ENCODE measurements at regions of chr4 and their contacts with region 1.

Region 1: GRCh38 chr4:123248085-123248659 is 148.4 kb upstream of the SPRY1 start:
- DNase-seq: no peak
- ATAC-seq: peak in 1 of 2 donors; percentile 48
- H3K4me3 ChIP-seq: no peak overlapping the region
- H3K27ac ChIP-seq: peak overlapping the region in 1 of 4 donors; percentile 2
- H3K4me1 ChIP-seq: peaks cover 17 to 23% of the 10 kb centered on the region in 2 donors
- H3K27me3 ChIP-seq: no peaks in the 10 kb centered on the region
- CTCF ChIP-seq: no peak
- POLR2A ChIP-seq: no peak

Region 2: GRCh38 chr4:123304151-123304964 is 56.2 kb after region 1 on chr4:
- in situ Hi-C with region 1: no loop called
- intact Hi-C with region 1: loop called (anchors 5 kb)
- DNase-seq: no peak
- ATAC-seq: no peak
- H3K4me3 ChIP-seq: no peak overlapping the region
- H3K27ac ChIP-seq: no peak overlapping the region
- H3K4me1 ChIP-seq: no peaks in the 10 kb centered on the region
- H3K27me3 ChIP-seq: no peaks in the 10 kb centered on the region
- CTCF ChIP-seq: no peak
- POLR2A ChIP-seq: no peak

Region 3: GRCh38 chr4:123340381-123340701 is 92.2 kb after region 1 on chr4:
- in situ Hi-C with region 1: no loop called
- intact Hi-C with region 1: loop called (anchors 5 kb)
- DNase-seq: no peak
- ATAC-seq: peak; percentile 77 to 83
- H3K4me3 ChIP-seq: no peak overlapping the region
- H3K27ac ChIP-seq: peak overlapping the region; percentile 57 to 73 (median 68)
- H3K4me1 ChIP-seq: peaks cover 4 to 9% of the 10 kb centered on the region in 2 donors
- H3K27me3 ChIP-seq: no peaks in the 10 kb centered on the region
- CTCF ChIP-seq: no peak
- POLR2A ChIP-seq: peak; percentile 21 to 39

Region 4: GRCh38 chr4:123505095-123506010 is 257.2 kb after region 1 on chr4:
- in situ Hi-C with region 1: no loop called
- intact Hi-C with region 1: loop called (anchors 5 kb)
- DNase-seq: peak in 1 of 2 donors; percentile 19
- ATAC-seq: peak; percentile 57 to 67
- H3K4me3 ChIP-seq: peak overlapping the region; percentile 54 to 71 (median 59)
- H3K27ac ChIP-seq: peak overlapping the region; percentile 3 to 63 (median 49)
- H3K4me1 ChIP-seq: peaks cover 7 to 11% of the 10 kb centered on the region in 2 donors
- H3K27me3 ChIP-seq: no peaks in the 10 kb centered on the region
- CTCF ChIP-seq: no peak
- POLR2A ChIP-seq: no peak